Natural killer cell (primary cell): ENCODE measurements at regions of chr1 and their contacts with region 1.

Region 1: GRCh38 chr1:64823691-64824476 is 79.0 kb downstream of the RAVER2 start:
- DNase-seq: peak; percentile 34 to 86
- ATAC-seq: peak; percentile 44 to 74 (median 68)
- H3K4me3 ChIP-seq: no peak overlapping the region
- H3K4me3 Mint-ChIP-seq: peak overlapping the region; percentile 38
- H3K27ac ChIP-seq: no peak overlapping the region
- H3K27ac Mint-ChIP-seq: peak overlapping the region; percentile 45 to 72
- H3K4me1 ChIP-seq: peaks cover 9% of the 10 kb centered on the region
- H3K4me1 Mint-ChIP-seq: peaks cover 36 to 38% of the 10 kb centered on the region in 2 donors
- H3K27me3 ChIP-seq: no peaks in the 10 kb centered on the region
- H3K27me3 Mint-ChIP-seq: no peaks in the 10 kb centered on the region
- CTCF ChIP-seq: peak; percentile 88

Region 2: GRCh38 chr1:64268653-64269557 is 555.0 kb before region 1 on chr1:
- intact Hi-C with region 1: loop called (anchors 1 kb)
- DNase-seq: peak in 1 of 2 donors; percentile 83
- ATAC-seq: peak in 1 of 3 donors; percentile 56
- H3K4me3 ChIP-seq: no peak overlapping the region
- H3K4me3 Mint-ChIP-seq: no peak overlapping the region
- H3K27ac ChIP-seq: no peak overlapping the region
- H3K27ac Mint-ChIP-seq: no peak overlapping the region
- H3K4me1 ChIP-seq: no peaks in the 10 kb centered on the region
- H3K4me1 Mint-ChIP-seq: no peaks in the 10 kb centered on the region
- H3K27me3 ChIP-seq: no peaks in the 10 kb centered on the region
- H3K27me3 Mint-ChIP-seq: peaks cover 17 to 20% of the 10 kb centered on the region in 2 donors
- CTCF ChIP-seq: peak; percentile 38

Region 3: DNA sequence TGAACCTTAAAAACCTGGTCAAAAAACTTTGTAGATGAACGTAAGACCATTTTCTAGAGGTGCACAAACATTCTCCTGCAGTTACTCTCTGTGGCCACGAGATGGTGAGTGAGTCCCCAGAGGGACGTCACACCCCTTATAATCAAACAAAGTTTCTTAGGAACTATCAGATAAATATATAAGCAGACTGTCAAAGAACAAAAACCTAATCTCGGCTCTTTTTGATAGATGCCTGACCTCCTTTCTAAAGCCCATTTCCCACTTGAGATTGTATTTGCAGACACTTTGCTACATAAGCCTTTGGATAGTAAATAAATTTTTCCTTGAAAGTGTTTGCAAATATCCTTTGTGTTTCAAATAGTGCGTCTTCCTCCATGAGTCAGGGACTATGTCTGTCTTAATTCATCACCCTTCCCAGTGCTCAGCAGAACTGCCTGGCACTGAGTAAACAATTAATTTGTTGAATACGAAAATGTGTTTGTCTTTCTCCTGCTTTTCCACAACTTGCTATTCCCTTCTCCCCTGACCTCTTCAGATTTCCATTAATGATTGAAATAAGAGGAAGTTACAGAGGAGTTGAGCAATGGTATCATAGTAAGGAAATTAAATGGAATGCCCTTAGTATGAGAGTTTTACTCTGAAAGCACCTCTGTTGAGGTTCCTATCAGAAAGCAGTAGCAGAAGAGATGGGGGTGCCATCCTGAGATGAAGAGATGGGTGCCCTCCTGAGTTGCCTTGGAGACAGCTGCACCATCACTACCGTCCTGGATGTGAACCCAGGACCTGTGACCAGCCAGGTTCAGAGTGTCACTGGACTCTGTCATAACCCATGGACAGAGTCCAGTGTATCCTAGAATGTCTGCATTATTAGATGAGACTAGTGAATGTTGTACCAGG is 136.8 kb before region 1 on chr1:
- intact Hi-C with region 1: loop called (anchors 1 kb)
- DNase-seq: peak in 1 of 2 donors; percentile 71
- ATAC-seq: peak in 2 of 3 donors; percentile 72 to 78
- H3K4me3 ChIP-seq: no peak overlapping the region
- H3K4me3 Mint-ChIP-seq: no peak overlapping the region
- H3K27ac ChIP-seq: no peak overlapping the region
- H3K27ac Mint-ChIP-seq: no peak overlapping the region
- H3K4me1 ChIP-seq: no peaks in the 10 kb centered on the region
- H3K4me1 Mint-ChIP-seq: no peaks in the 10 kb centered on the region
- H3K27me3 ChIP-seq: no peaks in the 10 kb centered on the region
- H3K27me3 Mint-ChIP-seq: peaks cover 4 to 12% of the 10 kb centered on the region in 2 donors
- CTCF ChIP-seq: peak; percentile 76

Region 4: GRCh38 chr1:64744492-64745180 is 79.2 kb before region 1 on chr1 and contains the start of gene RAVER2:
- intact Hi-C with region 1: loop called (anchors 10 kb)
- DNase-seq: peak; percentile 37 to 74
- ATAC-seq: peak; percentile 81 to 85 (median 84)
- H3K4me3 ChIP-seq: peak within 1 kb of the TSS; percentile 43
- H3K4me3 Mint-ChIP-seq: peak within 1 kb of the TSS; percentile 91
- H3K27ac ChIP-seq: peak within 1 kb of the TSS; percentile 16
- H3K27ac Mint-ChIP-seq: peak within 1 kb of the TSS in 1 of 2 donors; percentile 61
- H3K4me1 ChIP-seq: peaks cover 14% of the 10 kb centered on the region
- H3K4me1 Mint-ChIP-seq: peaks cover 20% of the 10 kb centered on the region in 2 donors
- H3K27me3 ChIP-seq: no peaks in the 10 kb centered on the region
- H3K27me3 Mint-ChIP-seq: peaks cover 3 to 8% of the 10 kb centered on the region in 2 donors
- CTCF ChIP-seq: peak; percentile 46
- total RNA-seq, gene RAVER2: 0.82 to 1.4 (median 1.2) TPM